Endothelial cell of umbilical vein (primary cell): ENCODE measurements at regions of chr12 and their contacts with region 1.

Region 1: DNA sequence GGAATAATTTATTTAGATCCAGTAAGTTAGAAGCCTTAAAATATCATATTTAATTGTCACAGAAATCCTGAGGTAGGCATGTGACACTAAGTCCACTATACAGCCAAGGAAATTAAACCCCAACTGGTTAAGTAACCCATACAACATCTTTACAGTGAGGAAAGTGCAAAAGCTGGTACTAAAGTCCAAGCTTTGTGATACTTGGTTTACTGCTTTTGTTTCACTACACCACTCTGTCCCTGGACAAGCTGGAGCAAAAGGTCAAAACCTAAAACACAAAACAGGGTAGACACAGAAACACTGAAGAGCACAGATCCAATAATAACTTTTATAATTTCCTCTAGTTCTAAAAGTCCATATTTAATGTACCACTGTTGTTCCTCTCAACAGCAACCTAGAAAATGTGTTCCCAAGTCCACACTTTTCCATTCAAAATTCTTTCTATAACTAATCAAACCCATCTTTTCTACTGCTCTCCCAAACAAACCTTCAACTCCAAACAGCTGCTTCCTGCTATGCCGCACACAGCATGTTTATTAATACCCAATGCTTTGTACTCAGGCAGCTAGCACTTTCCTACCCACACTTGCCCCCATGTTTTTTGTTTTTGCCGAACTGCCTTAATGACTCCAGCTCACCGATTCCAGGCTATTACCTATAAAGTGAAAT is 90.9 kb downstream of the MED13L start:
- DNase-seq: peak; percentile 88
- H3K4me3 ChIP-seq: no peak overlapping the region
- H3K27ac ChIP-seq: peak overlapping the region; percentile 85
- H3K4me1 ChIP-seq: peaks cover 50% of the 10 kb centered on the region
- H3K27me3 ChIP-seq: no peaks in the 10 kb centered on the region
- CTCF ChIP-seq: no peak
- POLR2A ChIP-seq: no peak

Region 2: DNA sequence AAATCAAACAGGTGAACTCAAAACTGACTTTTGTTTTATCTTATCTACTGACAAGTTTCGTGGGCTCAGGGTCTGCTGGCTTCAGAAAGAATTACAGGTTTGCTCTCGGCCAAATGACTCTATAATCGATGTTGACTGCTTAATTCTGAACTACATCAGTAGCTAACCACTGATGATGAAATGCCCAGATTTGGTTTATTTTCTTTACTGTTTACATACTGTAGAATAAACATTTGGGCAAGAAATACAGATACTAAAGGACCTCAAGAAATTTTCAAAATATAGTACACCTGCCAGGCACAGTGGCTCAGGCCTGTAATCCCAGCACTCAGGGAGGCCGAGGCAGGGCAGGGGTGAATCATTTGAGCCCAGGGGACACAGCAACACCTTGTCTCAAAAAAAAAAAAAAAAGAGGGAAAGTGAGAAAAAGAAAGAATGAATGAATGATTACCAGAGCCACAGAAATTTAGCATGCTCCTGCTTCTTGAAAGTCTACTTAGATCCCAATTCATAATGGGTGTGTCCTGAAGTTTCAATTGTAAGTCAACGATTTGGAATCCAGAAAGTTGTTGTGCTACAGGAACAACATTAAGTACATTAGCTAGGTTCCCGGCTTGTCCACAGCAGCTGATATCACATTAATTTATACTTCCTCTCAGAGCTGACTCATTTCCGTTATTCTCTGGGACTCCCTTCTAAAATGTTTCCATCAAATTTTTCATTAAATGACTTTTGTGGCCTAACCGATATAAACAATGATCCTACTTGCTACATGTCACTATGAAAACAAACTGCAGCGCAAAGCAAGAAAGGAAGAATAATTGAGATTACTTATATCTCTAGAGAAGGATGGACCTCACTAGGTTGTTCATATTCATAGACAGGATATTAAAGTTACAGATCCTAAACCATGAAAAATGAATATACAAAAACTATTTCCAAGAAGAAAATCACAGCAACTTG is 43.4 kb before region 1 on chr12:
- CTCF ChIA-PET with region 1: interaction called, 4 read pairs
- POLR2A ChIA-PET with region 1: no interaction called
- dilution Hi-C with region 1: no loop called
- intact Hi-C with region 1: loop called (anchors 2 kb)
- DNase-seq: peak; percentile 97
- H3K4me3 ChIP-seq: peak overlapping the region in 1 of 3 experiments; percentile 18
- H3K27ac ChIP-seq: peak overlapping the region; percentile 99
- H3K4me1 ChIP-seq: peaks cover 28% of the 10 kb centered on the region
- H3K27me3 ChIP-seq: no peaks in the 10 kb centered on the region
- CTCF ChIP-seq: no peak
- POLR2A ChIP-seq: peak; percentile 25